ENCODE measurements at regions of chr14 and their contacts with region 1.

Region 1: DNA sequence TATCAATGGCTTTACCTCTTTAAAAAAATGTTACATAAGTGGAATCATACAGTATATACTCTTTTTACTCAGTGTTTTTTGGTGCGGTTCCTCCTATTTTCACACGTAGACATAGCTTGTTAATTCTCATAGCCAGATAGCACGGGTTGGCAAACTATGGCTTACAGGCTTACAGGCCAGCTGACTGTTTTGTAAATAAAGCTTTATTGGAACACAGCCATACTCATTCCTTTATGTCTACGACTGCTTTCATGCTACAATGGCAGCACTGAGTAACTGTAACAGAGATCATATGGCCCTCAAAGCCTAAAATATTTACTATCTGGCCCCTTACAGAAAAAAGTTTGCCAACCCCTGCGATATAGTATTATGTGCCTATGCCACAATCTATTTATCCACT is 5.8 kb upstream of the DAAM1 start:
- DNase-seq: no peak
- H3K4me3 ChIP-seq: no peak overlapping the region
- H3K27ac ChIP-seq: no peak overlapping the region
- H3K4me1 ChIP-seq: no peaks in the 10 kb centered on the region
- H3K27me3 ChIP-seq: no peaks in the 10 kb centered on the region
- CTCF ChIP-seq: no peak
- POLR2A ChIP-seq: no peak

Region 2: GRCh38 chr14:59139324-59139723 is 43.3 kb before region 1 on chr14:
- intact Hi-C with region 1: loop called (anchors 5 kb)
- DNase-seq: no peak
- H3K4me3 ChIP-seq: no peak overlapping the region
- H3K27ac ChIP-seq: no peak overlapping the region
- H3K4me1 ChIP-seq: no peaks in the 10 kb centered on the region
- H3K27me3 ChIP-seq: no peaks in the 10 kb centered on the region
- CTCF ChIP-seq: no peak
- POLR2A ChIP-seq: no peak